GM12878 (cell line): ENCODE measurements at regions of chr7 and their contacts with region 1.

Region 1: GRCh38 chr7:30983042-30983913 is 19.5 kb downstream of the GHRHR start:
- DNase-seq: no peak
- ATAC-seq: peak; percentile 98
- H3K4me3 ChIP-seq: no peak overlapping the region
- H3K27ac ChIP-seq: no peak overlapping the region
- H3K4me1 ChIP-seq: no peaks in the 10 kb centered on the region
- H3K27me3 ChIP-seq: peaks cover 0 to 1% of the 10 kb centered on the region in 2 experiments; a peak in 3 of 4 replicates
- CTCF ChIP-seq: peak; percentile 90 to 97 (median 90)
- EP300 ChIP-seq: no peak
- POLR2A ChIP-seq: no peak
- RAD21 ChIP-seq: peak; percentile 74

Region 2: DNA sequence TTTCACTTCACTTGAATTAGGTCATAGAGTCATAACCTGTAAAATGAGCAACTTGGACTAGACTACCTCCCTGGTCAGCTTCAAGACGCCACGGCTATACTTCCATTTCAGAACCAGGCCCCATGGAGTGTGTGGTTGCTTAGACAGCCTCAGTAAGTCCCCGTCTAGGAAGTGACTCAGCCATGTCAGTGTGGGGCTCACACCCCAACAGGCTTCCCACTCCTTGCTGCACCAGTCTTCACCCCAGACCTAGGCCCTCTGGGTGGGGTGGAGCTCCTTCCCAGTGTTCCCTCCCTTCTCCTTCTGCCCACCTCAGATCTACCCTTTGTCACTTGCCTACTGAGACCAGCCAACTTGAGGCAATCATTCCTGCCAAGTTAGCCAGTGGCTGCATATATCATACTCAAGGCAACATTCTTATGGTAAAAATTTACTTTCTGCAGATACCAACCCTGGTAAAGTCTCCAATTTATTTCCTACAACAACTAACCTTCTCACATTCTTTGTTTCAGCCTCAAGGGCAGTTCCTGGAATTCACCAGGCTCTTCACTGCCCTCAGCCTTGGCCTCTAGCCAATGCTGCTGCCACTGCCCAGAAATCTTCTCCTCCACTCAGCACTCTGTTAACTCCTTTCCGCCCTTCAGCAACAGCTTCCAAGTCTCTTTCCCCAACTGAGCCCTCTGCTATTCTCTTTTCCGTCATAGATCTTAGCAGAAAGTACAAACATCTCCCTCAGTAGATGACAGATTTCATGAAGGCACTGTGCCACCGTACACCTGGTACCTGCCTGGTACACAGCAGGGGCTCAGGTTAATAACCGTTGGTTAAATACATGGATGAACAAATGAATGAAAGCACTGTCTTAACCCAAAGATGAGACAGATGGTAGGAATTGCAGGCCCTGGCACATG is 730.1 kb before region 1 on chr7:
- CTCF ChIA-PET with region 1: no interaction called
- POLR2A ChIA-PET with region 1: no interaction called
- RAD21 ChIA-PET with region 1: no interaction called
- SMC1A ChIA-PET with region 1: no interaction called
- in situ Hi-C with region 1: no loop called
- intact Hi-C with region 1: no loop called
- DNase-seq: no peak
- ATAC-seq: no peak; the same call in 2 of the 3 replicates
- H3K4me3 ChIP-seq: no peak overlapping the region
- H3K27ac ChIP-seq: no peak overlapping the region
- H3K4me1 ChIP-seq: 0 out of 2 replicates have a peak, but pooled peaks cover under 1% of the 10 kb centered on the region
- H3K27me3 ChIP-seq: no peaks in the 10 kb centered on the region
- CTCF ChIP-seq: no peak
- EP300 ChIP-seq: no peak
- POLR2A ChIP-seq: no peak
- RAD21 ChIP-seq: no peak

Region 3: GRCh38 chr7:30923009-30923773 is 60.1 kb before region 1 on chr7:
- CTCF ChIA-PET with region 1: no interaction called
- POLR2A ChIA-PET with region 1: no interaction called
- RAD21 ChIA-PET with region 1: no interaction called
- SMC1A ChIA-PET with region 1: no interaction called
- in situ Hi-C with region 1: no loop called
- intact Hi-C with region 1: no loop called
- DNase-seq: no peak
- ATAC-seq: no peak
- H3K4me3 ChIP-seq: no peak overlapping the region
- H3K27ac ChIP-seq: no peak overlapping the region
- H3K4me1 ChIP-seq: no peaks in the 10 kb centered on the region
- H3K27me3 ChIP-seq: no peaks in the 10 kb centered on the region; a peak in 1 of 4 replicates
- CTCF ChIP-seq: no peak
- EP300 ChIP-seq: no peak
- POLR2A ChIP-seq: no peak
- RAD21 ChIP-seq: no peak

Region 4: DNA sequence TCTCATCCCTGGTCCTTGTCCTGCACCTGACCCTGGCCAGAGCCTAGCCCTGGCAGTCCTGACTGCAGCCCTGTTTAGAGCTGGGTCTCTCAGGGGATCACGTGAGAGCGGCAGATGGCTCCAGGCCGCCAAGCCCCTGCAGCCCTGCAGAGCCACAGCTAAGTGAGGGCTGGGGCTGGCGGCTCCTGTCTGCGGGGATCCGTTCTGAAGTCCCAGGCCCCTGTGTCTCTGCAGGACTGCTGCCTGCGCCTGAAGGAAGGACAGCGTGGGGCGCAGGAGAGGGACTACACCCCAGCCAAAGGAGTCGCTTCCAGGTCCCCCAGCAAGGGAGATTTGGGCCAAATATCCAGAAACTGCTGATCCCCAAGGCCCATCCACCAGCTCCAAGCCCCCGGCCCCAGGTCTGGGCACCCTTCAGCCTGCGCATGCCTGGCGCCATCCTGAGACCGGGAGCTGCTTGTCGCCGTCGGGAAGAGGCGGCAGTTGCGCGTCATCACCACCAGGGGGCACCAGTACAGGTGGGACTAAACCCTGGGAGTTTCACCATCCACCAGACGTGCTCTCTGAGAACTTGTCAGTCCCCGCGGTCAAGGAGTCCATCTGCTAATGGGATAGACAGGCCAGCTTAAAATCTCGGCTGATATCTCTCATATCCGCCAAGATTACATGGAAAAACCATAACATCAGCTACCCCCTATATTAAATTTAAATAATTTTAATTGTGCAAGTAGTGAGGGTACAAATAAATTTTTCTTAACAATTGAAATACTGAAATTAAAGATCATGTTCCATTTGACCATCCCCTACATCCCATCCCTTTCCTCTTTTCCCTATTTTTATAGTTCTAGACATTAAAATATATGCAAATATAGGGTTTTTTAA is 44.6 kb before region 1 on chr7:
- CTCF ChIA-PET with region 1: interaction called, 159 read pairs
- POLR2A ChIA-PET with region 1: no interaction called
- RAD21 ChIA-PET with region 1: interaction called, 4 read pairs
- SMC1A ChIA-PET with region 1: interaction called, 19 read pairs
- in situ Hi-C with region 1: no loop called
- intact Hi-C with region 1: no loop called
- DNase-seq: peak; percentile 32
- ATAC-seq: peak; percentile 93
- H3K4me3 ChIP-seq: no peak overlapping the region
- H3K27ac ChIP-seq: no peak overlapping the region
- H3K4me1 ChIP-seq: no peaks in the 10 kb centered on the region
- H3K27me3 ChIP-seq: no peaks in the 10 kb centered on the region; a peak in 1 of 4 replicates
- CTCF ChIP-seq: peak; percentile 92 to 99 (median 95); a peak in 5 of 6 replicates
- EP300 ChIP-seq: no peak
- POLR2A ChIP-seq: no peak
- RAD21 ChIP-seq: peak; percentile 46; the same call in 1 of the 2 replicates

Region 5: GRCh38 chr7:31122649-31123058 is 139.4 kb after region 1 on chr7:
- CTCF ChIA-PET with region 1: interaction called, 398 read pairs
- POLR2A ChIA-PET with region 1: interaction called, 3 read pairs
- RAD21 ChIA-PET with region 1: interaction called, 176 read pairs
- SMC1A ChIA-PET with region 1: interaction called, 146 read pairs
- in situ Hi-C with region 1: loop called (anchors 5 kb)
- intact Hi-C with region 1: loop called (anchors 1 kb)
- DNase-seq: no peak
- ATAC-seq: peak; percentile 89
- H3K4me3 ChIP-seq: no peak overlapping the region
- H3K27ac ChIP-seq: no peak overlapping the region
- H3K4me1 ChIP-seq: no peaks in the 10 kb centered on the region
- H3K27me3 ChIP-seq: no peaks in the 10 kb centered on the region; a peak in 3 of 4 replicates
- CTCF ChIP-seq: peak; percentile 72 to 86 (median 79)
- EP300 ChIP-seq: no peak
- POLR2A ChIP-seq: no peak
- RAD21 ChIP-seq: peak; percentile 84

Region 6: DNA sequence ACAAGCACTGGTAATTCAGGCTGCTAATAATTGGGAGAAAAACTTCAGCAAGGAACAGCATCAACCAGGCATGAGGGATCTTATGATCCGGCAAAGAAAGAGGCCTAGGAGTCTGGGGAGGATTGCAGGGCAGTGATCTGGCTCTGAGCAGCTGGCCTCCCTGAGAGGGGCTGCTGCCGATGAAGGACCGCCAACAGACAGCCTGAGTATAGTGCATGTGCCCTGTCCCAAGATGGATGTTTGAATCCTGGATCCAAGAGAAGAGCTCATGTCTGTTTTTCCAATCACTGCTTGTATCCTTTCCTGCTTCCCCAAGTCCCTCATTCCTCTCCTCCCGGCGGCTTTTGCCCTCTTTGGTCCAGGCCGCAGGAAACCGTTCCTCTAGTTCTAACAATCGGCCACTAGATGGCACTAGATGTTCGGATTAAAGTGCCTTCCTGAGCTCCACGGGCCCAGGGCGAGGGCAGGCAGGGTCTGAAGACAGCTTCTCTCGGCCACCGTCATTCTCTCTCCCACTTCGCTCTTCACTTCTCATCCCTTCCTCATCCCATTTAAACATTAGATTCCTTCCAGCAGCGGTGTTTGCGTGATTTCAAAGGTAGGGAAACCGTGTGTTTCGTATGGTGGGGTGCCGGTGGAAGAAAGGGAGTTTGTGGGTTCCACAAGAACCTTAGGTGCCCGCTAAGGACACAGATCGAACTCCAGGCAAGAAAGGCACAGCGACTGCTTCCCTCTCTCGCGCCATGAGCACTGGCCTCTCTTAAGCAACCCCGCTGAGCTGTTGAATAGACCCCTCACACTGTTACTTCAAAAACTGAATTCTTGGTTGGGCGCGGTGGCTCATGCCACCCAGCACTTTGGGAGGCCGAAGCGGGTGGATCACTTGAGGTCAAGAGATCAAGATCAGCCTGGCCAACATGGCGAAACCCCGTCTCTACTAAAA is 151.2 kb after region 1 on chr7:
- CTCF ChIA-PET with region 1: interaction called, 18 read pairs
- POLR2A ChIA-PET with region 1: no interaction called
- RAD21 ChIA-PET with region 1: interaction called, 4 read pairs
- SMC1A ChIA-PET with region 1: interaction called, 8 read pairs
- in situ Hi-C with region 1: no loop called
- intact Hi-C with region 1: no loop called
- DNase-seq: no peak
- ATAC-seq: peak; percentile 97
- H3K4me3 ChIP-seq: no peak overlapping the region
- H3K27ac ChIP-seq: no peak overlapping the region
- H3K4me1 ChIP-seq: no peaks in the 10 kb centered on the region
- H3K27me3 ChIP-seq: no peaks in the 10 kb centered on the region
- CTCF ChIP-seq: peak; percentile 61 to 75 (median 63)
- EP300 ChIP-seq: no peak
- POLR2A ChIP-seq: no peak
- RAD21 ChIP-seq: peak; percentile 80